ENCODE measurements at regions of chr5 and their contacts with region 1.

Region 1: DNA sequence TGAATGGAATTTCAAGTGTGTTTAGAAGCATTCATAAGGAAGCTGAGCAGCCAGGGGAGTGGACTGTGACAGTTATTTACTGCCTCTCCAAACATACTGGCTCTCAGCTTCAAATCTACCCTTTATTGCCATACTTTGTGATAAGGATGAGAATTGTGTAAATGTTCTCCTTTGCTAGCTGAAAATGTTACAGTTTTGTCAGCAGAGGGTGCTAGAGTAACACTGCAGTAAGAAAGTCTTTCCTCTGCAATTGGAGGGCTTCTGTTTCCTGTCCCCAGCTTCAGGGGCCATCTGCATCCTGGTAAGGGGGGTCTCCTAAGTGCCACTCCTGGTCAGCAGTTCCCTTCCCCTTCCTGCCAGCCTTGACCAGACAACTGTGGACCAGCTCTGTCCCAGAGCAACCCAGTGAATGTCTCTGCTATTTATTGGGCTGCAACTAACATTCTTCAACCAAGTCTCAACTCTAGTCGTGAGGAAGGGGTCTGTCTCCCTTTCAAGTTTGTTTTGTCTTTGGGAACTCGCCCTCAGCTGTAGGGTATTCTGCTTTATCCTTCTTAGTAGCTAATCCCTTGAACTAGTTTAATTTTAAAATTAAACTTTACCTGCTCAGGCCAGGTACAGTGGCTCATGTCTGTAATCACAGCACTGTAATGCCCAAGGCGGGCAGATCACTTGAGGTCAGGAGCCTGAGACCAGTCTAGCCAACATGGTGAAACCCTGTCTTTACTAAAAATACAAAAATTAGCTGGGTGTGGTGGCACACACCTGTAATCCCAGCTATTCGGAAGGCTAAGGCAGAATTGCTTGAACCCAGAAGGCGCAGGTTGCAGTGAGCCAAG is 45.3 kb downstream of the RAPGEF6 start:
- DNase-seq: no peak
- ATAC-seq: peak; percentile 62

Region 2: DNA sequence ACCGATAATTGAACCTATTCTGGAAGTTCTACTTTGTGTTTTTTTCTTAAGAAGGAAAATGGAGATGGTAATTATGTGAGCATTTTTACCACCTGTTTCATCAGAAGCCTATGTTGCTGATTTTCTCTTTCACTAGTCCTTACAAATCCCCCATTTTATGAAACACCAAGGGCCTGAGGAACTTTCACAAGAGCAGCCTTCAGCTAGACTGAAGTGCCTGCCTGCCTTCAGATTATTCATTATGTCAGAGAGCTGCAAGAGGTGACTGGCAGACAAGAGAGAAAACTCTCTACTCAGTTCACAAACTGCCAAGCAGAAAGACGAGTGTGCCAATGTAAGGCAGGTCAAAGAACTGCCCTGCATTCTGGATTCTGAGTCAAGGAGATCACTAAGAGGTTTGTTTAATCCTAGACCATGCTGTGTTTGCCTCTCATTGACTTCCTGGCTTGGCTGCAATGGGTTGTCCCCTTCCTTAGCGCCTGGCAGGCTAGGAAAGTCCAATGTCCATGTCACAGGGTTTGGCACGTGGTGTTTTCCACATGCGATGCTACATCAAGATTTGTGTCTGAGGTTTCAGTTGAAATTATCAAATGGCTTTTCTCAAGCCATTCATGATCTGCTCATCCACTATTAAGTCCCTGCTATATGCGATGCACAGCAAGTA is 182.6 kb before region 1 on chr5:
- intact Hi-C with region 1: no loop called
- DNase-seq: no peak
- ATAC-seq: no peak

Region 3: DNA sequence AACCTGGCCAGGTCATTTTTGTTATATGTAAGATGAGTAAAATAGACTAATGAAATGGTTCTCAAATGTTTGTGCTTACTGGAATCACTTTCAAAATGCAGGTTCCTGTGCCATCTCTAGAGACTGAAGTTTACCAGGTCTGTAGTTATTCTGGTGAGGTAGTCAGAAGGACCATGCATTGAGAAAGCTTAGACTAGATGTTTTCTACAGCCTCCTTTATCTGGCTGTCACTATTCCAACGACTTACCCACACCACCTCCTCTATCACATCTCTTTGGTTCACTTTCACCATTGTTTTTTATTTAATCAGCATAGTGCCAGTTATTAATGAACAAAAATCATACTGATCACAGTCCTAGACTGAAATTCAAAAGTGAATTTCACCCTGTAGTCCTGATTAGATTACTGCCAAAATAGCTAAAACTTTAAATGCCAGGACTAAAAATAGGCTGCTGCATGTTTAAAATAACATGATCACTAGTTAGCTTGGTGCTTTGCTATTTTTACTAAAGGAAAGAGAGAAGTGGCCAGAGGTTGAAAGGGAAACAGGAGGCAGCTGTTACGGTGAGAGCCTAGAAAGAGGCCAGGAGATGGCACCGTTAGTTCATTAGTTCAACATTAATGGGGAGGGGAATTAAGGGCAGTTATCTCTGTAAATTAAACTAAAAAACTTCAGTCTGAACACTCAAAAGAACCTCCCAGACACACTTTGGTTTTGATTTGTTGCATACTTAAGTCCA is 221.0 kb after region 1 on chr5:
- intact Hi-C with region 1: loop called (anchors 1 kb)
- DNase-seq: no peak
- ATAC-seq: peak; percentile 77